Ascending aorta (tissue), 2 donors: ENCODE measurements at regions of chr15 and their contacts with region 1.

Region 1: DNA sequence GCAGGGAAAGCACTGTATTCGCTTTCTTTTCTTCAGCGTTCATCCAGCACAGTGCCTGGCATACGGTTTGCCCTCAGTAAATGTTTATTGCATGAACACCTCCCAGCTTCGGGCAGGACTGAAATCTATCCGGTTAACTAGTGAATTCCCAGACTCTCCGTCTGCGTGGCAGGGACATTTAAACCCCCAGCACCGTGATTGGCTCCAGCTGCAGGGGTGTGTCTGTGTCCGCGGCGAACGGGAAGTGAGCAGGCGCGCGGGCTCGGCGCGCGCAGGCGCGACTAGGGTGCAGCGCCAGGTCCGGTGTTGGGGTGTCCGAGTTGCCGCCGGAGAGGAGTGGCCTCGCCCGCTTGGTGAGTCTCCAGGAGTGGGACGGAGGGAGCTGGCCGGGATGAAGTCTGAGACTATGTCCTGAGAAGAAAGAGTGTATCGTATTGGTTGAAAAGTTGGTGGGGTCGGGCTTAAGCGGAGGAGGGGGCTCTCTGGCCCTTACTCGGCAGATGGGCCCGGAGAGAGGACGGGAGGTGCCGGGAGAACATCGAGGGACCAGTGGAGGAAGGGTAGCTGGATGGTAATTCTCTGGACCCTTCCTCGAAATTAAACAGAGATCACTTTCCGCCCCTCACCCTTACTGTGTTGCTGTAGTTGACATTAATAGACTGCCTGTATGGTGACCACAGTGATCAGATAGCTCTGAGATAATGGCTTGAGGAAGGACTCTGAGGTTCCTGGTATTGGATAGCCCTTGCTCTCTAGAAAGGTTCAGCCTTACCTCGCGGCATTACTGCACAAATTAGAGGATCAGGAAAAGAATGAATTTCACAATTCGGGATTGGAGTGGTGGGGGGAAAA is at the start of gene SNAP23:
- DNase-seq: peak; percentile 89 to 98
- H3K4me3 ChIP-seq: peak within 1 kb of the TSS; percentile 70 to 87
- H3K27ac ChIP-seq: peak within 1 kb of the TSS; percentile 86 to 92
- H3K4me1 ChIP-seq: peaks cover 0 to 32% of the 10 kb centered on the region in 2 donors
- H3K27me3 ChIP-seq: no peaks in the 10 kb centered on the region
- CTCF ChIP-seq: no peak
- total RNA-seq, gene SNAP23: 31.8 TPM

Region 2: GRCh38 chr15:42273102-42273899 is 222.3 kb before region 1 on chr15 and contains the starts of genes GANC and TMEM87A:
- intact Hi-C with region 1: loop called (anchors 5 kb)
- DNase-seq: peak; percentile 93 to 99
- H3K4me3 ChIP-seq: peak within 1 kb of the TSS; percentile 74 to 89
- H3K27ac ChIP-seq: peak within 1 kb of the TSS; percentile 99 to 100
- H3K4me1 ChIP-seq: peaks cover 9 to 40% of the 10 kb centered on the region in 2 donors
- H3K27me3 ChIP-seq: no peaks in the 10 kb centered on the region
- CTCF ChIP-seq: no peak
- total RNA-seq, gene GANC: 22.9 TPM
- total RNA-seq, gene TMEM87A: 25.4 TPM

Region 3: GRCh38 chr15:42457445-42458442 is 37.8 kb before region 1 on chr15:
- intact Hi-C with region 1: loop called (anchors 1 kb)
- DNase-seq: peak; percentile 13 to 92
- H3K4me3 ChIP-seq: peak overlapping the region; percentile 38 to 50
- H3K27ac ChIP-seq: peak overlapping the region; percentile 84 to 90
- H3K4me1 ChIP-seq: peaks cover 4 to 20% of the 10 kb centered on the region in 2 donors
- H3K27me3 ChIP-seq: no peaks in the 10 kb centered on the region
- CTCF ChIP-seq: no peak

Region 4: GRCh38 chr15:42474827-42475226 is 20.8 kb before region 1 on chr15:
- intact Hi-C with region 1: loop called (anchors 2 kb)
- DNase-seq: no peak
- H3K4me3 ChIP-seq: no peak overlapping the region
- H3K27ac ChIP-seq: peak overlapping the region; percentile 25 to 62
- H3K4me1 ChIP-seq: peaks cover 0 to 14% of the 10 kb centered on the region in 2 donors
- H3K27me3 ChIP-seq: no peaks in the 10 kb centered on the region
- CTCF ChIP-seq: no peak

Region 5: DNA sequence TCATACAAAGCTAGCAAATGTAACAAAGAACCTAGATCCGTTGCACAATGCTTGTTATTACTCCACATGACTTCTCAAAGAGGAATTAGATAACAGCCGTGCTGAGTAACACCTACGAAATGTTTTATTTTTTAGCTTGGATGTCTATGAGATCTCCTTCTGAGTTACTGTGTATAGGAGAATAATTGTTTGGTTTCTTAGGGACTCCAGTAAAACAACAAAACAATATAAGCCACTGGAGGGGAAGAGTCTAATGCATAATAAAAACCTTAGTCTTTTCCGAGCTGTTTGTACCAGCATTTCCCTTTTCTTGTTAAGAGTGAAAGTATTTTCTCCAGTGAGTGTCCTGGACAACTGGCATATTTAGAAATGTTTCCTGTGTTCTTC is 15.4 kb after region 1 on chr15:
- intact Hi-C with region 1: loop called (anchors 2 kb)
- DNase-seq: no peak
- H3K4me3 ChIP-seq: peak overlapping the region; percentile 19 to 24
- H3K27ac ChIP-seq: peak overlapping the region; percentile 71 to 76
- H3K4me1 ChIP-seq: peaks cover 0 to 38% of the 10 kb centered on the region in 2 donors
- H3K27me3 ChIP-seq: no peaks in the 10 kb centered on the region
- CTCF ChIP-seq: no peak

Region 6: DNA sequence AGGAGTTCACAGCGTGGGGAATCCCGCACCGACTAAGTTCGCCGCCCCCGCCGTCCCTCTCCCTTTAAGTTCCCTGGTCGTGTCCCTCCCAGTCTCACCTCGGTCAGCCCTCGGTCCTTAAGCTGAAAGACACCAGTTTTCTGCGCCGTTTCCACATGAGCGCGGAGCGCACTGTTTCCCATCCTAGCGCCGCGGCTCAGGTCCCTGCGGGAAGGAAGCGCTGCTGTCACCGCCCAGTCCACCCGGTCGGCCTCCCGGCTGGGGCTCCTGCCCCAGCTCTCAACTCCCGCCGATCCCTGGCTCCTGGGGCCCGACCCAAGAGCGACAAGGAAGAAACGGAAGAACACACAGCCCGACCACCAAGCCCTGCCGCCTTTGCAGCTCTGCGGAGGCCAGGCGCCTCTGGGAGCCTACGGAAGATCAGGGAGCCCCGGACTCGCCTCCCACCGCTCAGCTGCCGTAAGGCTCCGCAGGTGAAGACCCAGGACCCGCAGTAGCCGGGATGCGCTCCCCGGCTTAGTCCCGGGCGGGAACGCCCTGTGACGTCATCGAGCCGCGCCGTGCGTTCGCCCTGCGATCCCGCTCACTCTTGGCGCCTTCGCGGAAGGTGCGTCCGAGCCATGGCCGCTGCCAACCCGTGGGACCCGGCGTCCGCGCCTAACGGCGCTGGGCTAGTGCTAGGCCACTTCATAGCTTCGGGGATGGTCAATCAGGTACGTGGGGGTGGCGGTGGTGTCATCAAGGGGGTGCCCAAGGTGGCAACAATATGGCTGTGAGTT is 52.9 kb after region 1 on chr15 and contains the starts of genes HAUS2 and LRRC57:
- intact Hi-C with region 1: loop called (anchors 2 kb)
- DNase-seq: peak; percentile 36 to 90
- H3K4me3 ChIP-seq: peak within 1 kb of the TSS; percentile 81 to 92
- H3K27ac ChIP-seq: peak within 1 kb of the TSS; percentile 92 to 94
- H3K4me1 ChIP-seq: peaks cover 0 to 22% of the 10 kb centered on the region in 2 donors
- H3K27me3 ChIP-seq: no peaks in the 10 kb centered on the region
- CTCF ChIP-seq: no peak
- total RNA-seq, gene HAUS2: 92.6 TPM
- total RNA-seq, gene LRRC57: 1.6 TPM

Region 7: GRCh38 chr15:42575188-42576039 is 79.8 kb after region 1 on chr15 and contains the start of gene STARD9:
- intact Hi-C with region 1: loop called (anchors 1 kb)
- DNase-seq: peak; percentile 97 to 99
- H3K4me3 ChIP-seq: peak within 1 kb of the TSS; percentile 88 to 91
- H3K27ac ChIP-seq: peak within 1 kb of the TSS; percentile 88 to 94
- H3K4me1 ChIP-seq: peaks cover 0 to 19% of the 10 kb centered on the region in 2 donors
- H3K27me3 ChIP-seq: no peaks in the 10 kb centered on the region
- CTCF ChIP-seq: no peak
- total RNA-seq, gene STARD9: 62.7 TPM